Posterior cingulate gyrus (tissue), 11 donors: ENCODE measurements at regions of chr11 and their contacts with region 1.

Region 1: GRCh38 chr11:121321614-121322243 is 29.2 kb downstream of the SC5D start:
- DNase-seq: peak; percentile 24 to 94 (median 67)

Region 2: GRCh38 chr11:121446752-121447156 is 125.0 kb after region 1 on chr11:
- intact Hi-C with region 1: loop called (anchors 5 kb)
- DNase-seq: no peak